MCF 10A (cell line): ENCODE measurements at regions of chr12 and their contacts with region 1.

Region 1: GRCh38 chr12:56521590-56522371 is at the start of gene RBMS2:
- DNase-seq: peak; percentile 94
- H3K4me3 Mint-ChIP-seq: peak within 1 kb of the TSS; percentile 74
- H3K27ac Mint-ChIP-seq: peak within 1 kb of the TSS; percentile 91
- H3K4me1 Mint-ChIP-seq: peaks cover 32% of the 10 kb centered on the region
- H3K27me3 Mint-ChIP-seq: no peaks in the 10 kb centered on the region
- CTCF ChIP-seq: no peak
- total RNA-seq, gene RBMS2: 34.9 and 62.7 TPM in 2 replicates

Region 2: DNA sequence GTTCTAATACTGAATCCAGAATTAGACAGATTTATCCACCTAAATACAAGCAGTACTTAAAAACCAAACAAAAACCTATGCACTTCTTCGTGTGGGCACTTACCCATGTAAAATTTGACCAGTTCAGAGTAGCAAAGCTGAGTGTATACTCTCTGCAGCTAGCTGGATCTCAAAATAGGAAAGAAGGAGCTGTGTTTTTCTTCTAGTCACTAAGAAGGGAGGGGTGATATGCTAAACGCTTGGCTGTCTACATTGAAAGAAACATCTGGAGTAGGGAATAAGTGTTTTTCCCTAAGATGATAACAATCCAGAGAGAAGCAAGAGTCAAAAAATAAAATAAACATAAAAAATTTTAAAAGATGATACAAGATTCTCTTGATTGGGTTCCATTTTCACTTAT is 19.9 kb after region 1 on chr12:
- CTCF ChIA-PET with region 1: interaction called, 3 read pairs
- POLR2A ChIA-PET with region 1: interaction called, 19 read pairs
- intact Hi-C with region 1: no loop called
- DNase-seq: no peak
- H3K4me3 Mint-ChIP-seq: no peak overlapping the region
- H3K27ac Mint-ChIP-seq: no peak overlapping the region
- H3K4me1 Mint-ChIP-seq: peaks cover 11% of the 10 kb centered on the region
- H3K27me3 Mint-ChIP-seq: no peaks in the 10 kb centered on the region
- CTCF ChIP-seq: no peak

Region 3: DNA sequence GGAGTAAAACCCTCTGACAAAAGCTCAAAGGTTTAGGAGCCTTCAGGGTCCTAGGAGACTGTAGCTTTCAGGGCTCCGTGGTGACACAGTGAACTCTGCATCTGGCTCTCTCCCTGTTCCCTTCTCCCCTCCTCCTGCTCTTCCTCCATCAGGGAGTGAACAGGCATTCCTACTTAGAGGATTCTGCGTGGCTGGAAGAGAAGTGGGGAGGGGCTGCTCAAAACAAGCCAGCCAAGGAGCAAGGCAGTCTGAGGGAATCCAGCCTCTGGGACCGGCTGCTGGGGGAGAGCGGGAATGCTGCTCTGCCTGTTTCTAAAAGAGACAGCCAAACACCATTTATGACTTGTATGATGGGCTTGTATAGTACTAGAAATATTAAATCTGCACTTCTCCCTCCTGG is 49.3 kb after region 1 on chr12:
- CTCF ChIA-PET with region 1: interaction called, 112 read pairs
- POLR2A ChIA-PET with region 1: interaction called, 46 read pairs
- intact Hi-C with region 1: no loop called
- DNase-seq: no peak
- H3K4me3 Mint-ChIP-seq: no peak overlapping the region
- H3K27ac Mint-ChIP-seq: no peak overlapping the region
- H3K4me1 Mint-ChIP-seq: peaks cover 22% of the 10 kb centered on the region
- H3K27me3 Mint-ChIP-seq: no peaks in the 10 kb centered on the region
- CTCF ChIP-seq: no peak

Region 4: GRCh38 chr12:56630160-56630632 is 108.4 kb after region 1 on chr12 and contains the start of gene BAZ2A:
- CTCF ChIA-PET with region 1: interaction called, 27 read pairs
- POLR2A ChIA-PET with region 1: interaction called, 83 read pairs
- intact Hi-C with region 1: no loop called
- DNase-seq: peak; percentile 83
- H3K4me3 Mint-ChIP-seq: peak within 1 kb of the TSS; percentile 71
- H3K27ac Mint-ChIP-seq: peak within 1 kb of the TSS; percentile 11
- H3K4me1 Mint-ChIP-seq: peaks cover 38% of the 10 kb centered on the region
- H3K27me3 Mint-ChIP-seq: no peaks in the 10 kb centered on the region
- CTCF ChIP-seq: no peak
- total RNA-seq, gene BAZ2A: 87.3 and 101 TPM in 2 replicates

Region 5: DNA sequence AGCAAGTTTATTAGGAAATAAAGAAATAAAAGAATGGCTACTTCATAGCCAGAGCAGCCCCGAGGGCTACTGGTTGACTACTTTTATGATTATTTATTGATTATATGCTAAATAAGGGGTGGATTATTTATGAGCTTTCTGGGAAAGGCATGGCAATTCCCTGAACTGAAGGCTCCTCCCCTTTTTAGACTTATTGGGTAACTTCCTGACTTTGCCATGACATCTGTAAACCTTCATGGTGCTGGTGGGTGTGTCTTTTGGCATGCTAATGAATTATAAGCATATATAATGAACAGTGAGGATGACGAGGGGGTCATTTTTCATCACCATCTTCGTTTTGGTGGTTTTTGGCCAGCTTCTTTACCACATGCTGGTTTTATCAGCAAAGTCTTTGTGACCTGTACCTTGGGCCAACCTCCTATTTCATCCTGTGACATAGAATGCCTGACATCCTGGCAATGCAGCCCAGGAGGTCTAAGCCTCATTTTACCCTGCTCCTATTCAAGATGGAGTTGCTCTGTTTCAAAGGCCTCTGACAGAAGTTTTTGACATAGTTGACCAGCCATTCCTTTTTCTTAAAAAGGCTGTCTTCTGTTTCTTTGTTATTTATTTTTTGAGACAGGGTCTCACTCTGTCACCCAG is 177.4 kb after region 1 on chr12:
- CTCF ChIA-PET with region 1: no interaction called
- POLR2A ChIA-PET with region 1: no interaction called
- intact Hi-C with region 1: no loop called
- DNase-seq: no peak
- H3K4me3 Mint-ChIP-seq: no peak overlapping the region
- H3K27ac Mint-ChIP-seq: no peak overlapping the region
- H3K4me1 Mint-ChIP-seq: no peaks in the 10 kb centered on the region
- H3K27me3 Mint-ChIP-seq: no peaks in the 10 kb centered on the region
- CTCF ChIP-seq: no peak

Region 6: GRCh38 chr12:56836800-56837663 is 315.3 kb after region 1 on chr12:
- CTCF ChIA-PET with region 1: no interaction called
- POLR2A ChIA-PET with region 1: no interaction called
- intact Hi-C with region 1: no loop called
- DNase-seq: peak; percentile 91
- H3K4me3 Mint-ChIP-seq: peak overlapping the region; percentile 34
- H3K27ac Mint-ChIP-seq: peak overlapping the region; percentile 83
- H3K4me1 Mint-ChIP-seq: peaks cover 30% of the 10 kb centered on the region
- H3K27me3 Mint-ChIP-seq: no peaks in the 10 kb centered on the region
- CTCF ChIP-seq: no peak